ENCODE measurements at regions of chr17 and their contacts with region 1.

Region 1: GRCh38 chr17:74659898-74660297 is 36.4 kb upstream of the CD300E start:
- DNase-seq: no peak
- H3K4me3 ChIP-seq: no peak overlapping the region
- H3K4me3 Mint-ChIP-seq: no peak overlapping the region
- H3K27ac ChIP-seq: no peak overlapping the region
- H3K27ac Mint-ChIP-seq: no peak overlapping the region
- H3K4me1 ChIP-seq: peaks cover 3% of the 10 kb centered on the region
- H3K4me1 Mint-ChIP-seq: peaks cover 4 to 7% (median 5%) of the 10 kb centered on the region in 4 donors
- H3K27me3 ChIP-seq: no peaks in the 10 kb centered on the region
- H3K27me3 Mint-ChIP-seq: peaks cover 21 to 25% of the 10 kb centered on the region in 2 donors

Region 2: GRCh38 chr17:74437702-74438101 is 222.2 kb before region 1 on chr17:
- CTCF ChIA-PET with region 1: no interaction called
- POLR2A ChIA-PET with region 1: no interaction called
- intact Hi-C with region 1: no loop called
- DNase-seq: no peak
- H3K4me3 ChIP-seq: no peak overlapping the region
- H3K4me3 Mint-ChIP-seq: peak overlapping the region in 1 of 8 donors; percentile 46
- H3K27ac ChIP-seq: no peak overlapping the region
- H3K27ac Mint-ChIP-seq: no peak overlapping the region
- H3K4me1 ChIP-seq: no peaks in the 10 kb centered on the region
- H3K4me1 Mint-ChIP-seq: peaks cover 0 to 1% (median 0%) of the 10 kb centered on the region in 4 donors
- H3K27me3 ChIP-seq: peaks cover 6% of the 10 kb centered on the region
- H3K27me3 Mint-ChIP-seq: peaks cover 14 to 26% of the 10 kb centered on the region in 2 donors

Region 3: GRCh38 chr17:74677558-74678466 is 17.9 kb after region 1 on chr17:
- CTCF ChIA-PET with region 1: interaction called, 33 read pairs
- POLR2A ChIA-PET with region 1: interaction called, 8 read pairs
- intact Hi-C with region 1: no loop called
- DNase-seq: peak in 3 of 5 donors; percentile 5 to 20 (median 8)
- H3K4me3 ChIP-seq: no peak overlapping the region
- H3K4me3 Mint-ChIP-seq: peak overlapping the region in 6 of 8 donors; percentile 7 to 78 (median 38)
- H3K27ac ChIP-seq: no peak overlapping the region
- H3K27ac Mint-ChIP-seq: peak overlapping the region in 6 of 7 donors; percentile 36 to 86 (median 67)
- H3K4me1 ChIP-seq: peaks cover 17% of the 10 kb centered on the region
- H3K4me1 Mint-ChIP-seq: peaks cover 15 to 27% (median 22%) of the 10 kb centered on the region in 4 donors
- H3K27me3 ChIP-seq: peaks cover 3% of the 10 kb centered on the region
- H3K27me3 Mint-ChIP-seq: peaks cover 9 to 24% of the 10 kb centered on the region in 2 donors

Region 4: GRCh38 chr17:74694081-74694480 is 34.2 kb after region 1 on chr17:
- CTCF ChIA-PET with region 1: no interaction called
- POLR2A ChIA-PET with region 1: no interaction called
- intact Hi-C with region 1: no loop called
- DNase-seq: no peak
- H3K4me3 ChIP-seq: no peak overlapping the region
- H3K4me3 Mint-ChIP-seq: no peak overlapping the region
- H3K27ac ChIP-seq: no peak overlapping the region
- H3K27ac Mint-ChIP-seq: no peak overlapping the region
- H3K4me1 ChIP-seq: no peaks in the 10 kb centered on the region
- H3K4me1 Mint-ChIP-seq: peaks cover 0 to 3% (median 0%) of the 10 kb centered on the region in 4 donors
- H3K27me3 ChIP-seq: no peaks in the 10 kb centered on the region
- H3K27me3 Mint-ChIP-seq: peaks cover 0 to 6% of the 10 kb centered on the region in 2 donors

Region 5: DNA sequence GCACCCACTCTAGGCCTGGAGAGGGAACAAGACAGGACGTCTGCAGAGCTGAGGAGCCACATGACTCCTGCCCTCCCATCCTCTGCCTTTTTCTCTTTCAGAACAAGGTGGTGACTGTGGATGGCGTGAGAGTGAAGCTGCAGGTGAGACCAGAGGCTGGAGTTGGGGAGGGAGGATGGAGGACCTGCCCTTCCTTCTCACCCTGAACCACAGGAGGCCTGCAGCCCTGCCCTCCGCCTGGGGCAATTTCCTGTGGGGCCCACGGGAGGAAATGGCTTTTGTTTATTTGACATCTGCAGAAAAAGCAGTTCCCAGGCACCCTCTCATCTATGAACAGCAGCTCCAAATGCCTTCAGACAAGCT is 82.2 kb after region 1 on chr17:
- CTCF ChIA-PET with region 1: interaction called, 326 read pairs
- POLR2A ChIA-PET with region 1: interaction called, 85 read pairs
- intact Hi-C with region 1: loop called (anchors 1 kb)
- DNase-seq: peak in 4 of 5 donors; percentile 46 to 58 (median 57)
- H3K4me3 ChIP-seq: peak overlapping the region; percentile 20 to 30
- H3K4me3 Mint-ChIP-seq: peak overlapping the region; percentile 72 to 91 (median 79)
- H3K27ac ChIP-seq: peak overlapping the region; percentile 49
- H3K27ac Mint-ChIP-seq: peak overlapping the region in 6 of 7 donors; percentile 88 to 96 (median 90)
- H3K4me1 ChIP-seq: peaks cover 95% of the 10 kb centered on the region
- H3K4me1 Mint-ChIP-seq: peaks cover 54 to 95% (median 75%) of the 10 kb centered on the region in 4 donors
- H3K27me3 ChIP-seq: no peaks in the 10 kb centered on the region
- H3K27me3 Mint-ChIP-seq: no peaks in the 10 kb centered on the region

Region 6: GRCh38 chr17:74770498-74771318 is 110.8 kb after region 1 on chr17:
- CTCF ChIA-PET with region 1: interaction called, 181 read pairs
- POLR2A ChIA-PET with region 1: interaction called, 29 read pairs
- intact Hi-C with region 1: loop called (anchors 1 kb)
- DNase-seq: peak; percentile 79
- H3K4me3 ChIP-seq: no peak overlapping the region
- H3K4me3 Mint-ChIP-seq: peak overlapping the region in 3 of 8 donors; percentile 20 to 46 (median 24)
- H3K27ac ChIP-seq: peak overlapping the region; percentile 46
- H3K27ac Mint-ChIP-seq: peak overlapping the region; percentile 64 to 92 (median 89)
- H3K4me1 ChIP-seq: peaks cover 31% of the 10 kb centered on the region
- H3K4me1 Mint-ChIP-seq: peaks cover 21 to 67% (median 39%) of the 10 kb centered on the region in 4 donors
- H3K27me3 ChIP-seq: no peaks in the 10 kb centered on the region
- H3K27me3 Mint-ChIP-seq: no peaks in the 10 kb centered on the region

Region 7: GRCh38 chr17:74790161-74791054 is 130.5 kb after region 1 on chr17:
- CTCF ChIA-PET with region 1: interaction called, 45 read pairs
- POLR2A ChIA-PET with region 1: interaction called, 8 read pairs
- intact Hi-C with region 1: no loop called
- DNase-seq: no peak
- H3K4me3 ChIP-seq: no peak overlapping the region
- H3K4me3 Mint-ChIP-seq: peak overlapping the region in 6 of 8 donors; percentile 51 to 70 (median 58)
- H3K27ac ChIP-seq: no peak overlapping the region
- H3K27ac Mint-ChIP-seq: peak overlapping the region in 4 of 7 donors; percentile 42 to 82 (median 68)
- H3K4me1 ChIP-seq: peaks cover 19% of the 10 kb centered on the region
- H3K4me1 Mint-ChIP-seq: peaks cover 17 to 41% (median 29%) of the 10 kb centered on the region in 4 donors
- H3K27me3 ChIP-seq: no peaks in the 10 kb centered on the region
- H3K27me3 Mint-ChIP-seq: no peaks in the 10 kb centered on the region